Adrenal gland (tissue), 19 donors: ENCODE measurements at regions of chr2 and their contacts with region 1.

Region 1: GRCh38 chr2:100610381-100610831 is 47.6 kb downstream of the PDCL3 start:
- DNase-seq: peak; percentile 49 to 86 (median 69)
- H3K4me3 ChIP-seq: no peak overlapping the region
- H3K27ac ChIP-seq: no peak overlapping the region
- H3K4me1 ChIP-seq: no peaks in the 10 kb centered on the region
- H3K27me3 ChIP-seq: no peaks in the 10 kb centered on the region
- CTCF ChIP-seq: peak in 5 of 6 experiments; percentile 23 to 64 (median 54)
- POLR2A ChIP-seq: no peak

Region 2: DNA sequence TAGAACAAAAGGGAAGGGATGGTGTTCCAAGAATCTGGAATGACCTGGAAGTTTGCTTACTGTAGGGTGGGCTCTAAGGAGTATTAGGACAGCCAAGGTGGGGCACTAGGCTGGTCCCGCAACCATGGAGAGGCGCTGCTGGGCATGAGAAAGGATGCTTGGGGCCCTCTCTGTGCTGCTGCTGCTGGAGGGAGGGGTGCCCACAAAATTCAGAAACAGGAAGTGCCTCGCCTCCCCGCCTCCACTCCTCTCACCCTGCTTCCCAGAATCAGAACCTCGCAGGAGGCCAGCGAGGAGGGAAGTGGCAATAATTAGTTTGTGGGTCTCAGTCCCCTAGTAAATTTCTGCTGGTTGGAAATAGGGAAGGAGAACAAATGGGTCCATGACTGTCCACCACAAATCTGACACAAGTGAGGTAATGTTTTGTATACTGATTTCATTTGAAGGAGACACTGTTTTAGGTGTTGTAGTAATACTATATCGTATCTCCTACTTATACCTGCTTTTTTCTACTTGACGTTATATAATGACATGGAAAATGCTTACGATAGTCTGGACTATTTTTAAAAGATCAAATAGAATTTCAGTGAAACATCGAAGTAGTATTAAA is 55.5 kb before region 1 on chr2:
- intact Hi-C with region 1: no loop called
- DNase-seq: peak in 1 of 7 donors; percentile 12
- H3K4me3 ChIP-seq: no peak overlapping the region
- H3K27ac ChIP-seq: no peak overlapping the region
- H3K4me1 ChIP-seq: no peaks in the 10 kb centered on the region
- H3K27me3 ChIP-seq: no peaks in the 10 kb centered on the region
- CTCF ChIP-seq: no peak
- POLR2A ChIP-seq: no peak

Region 3: GRCh38 chr2:100767224-100767653 is 156.8 kb after region 1 on chr2:
- intact Hi-C with region 1: no loop called
- DNase-seq: no peak
- H3K4me3 ChIP-seq: no peak overlapping the region
- H3K27ac ChIP-seq: no peak overlapping the region
- H3K4me1 ChIP-seq: peaks cover 0 to 6% of the 10 kb centered on the region in 2 donors
- H3K27me3 ChIP-seq: no peaks in the 10 kb centered on the region
- CTCF ChIP-seq: no peak
- POLR2A ChIP-seq: no peak

Region 4: GRCh38 chr2:100882645-100883613 is 272.5 kb after region 1 on chr2:
- intact Hi-C with region 1: no loop called
- DNase-seq: peak; percentile 80 to 92 (median 88)
- H3K4me3 ChIP-seq: no peak overlapping the region
- H3K27ac ChIP-seq: peak overlapping the region in 2 of 5 donors; percentile 32 to 68
- H3K4me1 ChIP-seq: peaks cover 21% of the 10 kb centered on the region in 2 donors
- H3K27me3 ChIP-seq: no peaks in the 10 kb centered on the region
- CTCF ChIP-seq: no peak
- POLR2A ChIP-seq: no peak

Region 5: DNA sequence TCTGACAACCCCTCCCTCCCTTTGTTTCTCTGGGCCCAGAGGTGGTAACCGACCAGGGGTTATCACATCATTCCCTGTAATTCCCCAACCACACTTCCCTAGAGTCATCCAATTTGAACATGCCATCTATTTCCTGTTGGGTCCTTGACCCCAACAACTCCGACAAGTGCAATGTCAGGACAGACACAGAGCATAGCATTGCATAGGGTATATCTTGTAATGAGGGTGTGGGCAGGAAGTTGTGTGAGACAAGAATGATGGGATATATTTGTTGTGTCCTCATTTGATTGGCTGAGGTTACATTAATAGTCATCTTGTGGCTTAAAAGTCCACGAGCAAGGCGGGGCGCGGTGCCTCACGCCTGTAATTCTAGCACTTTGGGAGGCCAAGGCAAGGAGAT is 608.8 kb after region 1 on chr2:
- intact Hi-C with region 1: loop called in 1 of 2 experiments (anchors 10 kb)
- DNase-seq: no peak
- H3K4me3 ChIP-seq: no peak overlapping the region
- H3K27ac ChIP-seq: no peak overlapping the region
- H3K4me1 ChIP-seq: no peaks in the 10 kb centered on the region
- H3K27me3 ChIP-seq: no peaks in the 10 kb centered on the region
- CTCF ChIP-seq: no peak
- POLR2A ChIP-seq: no peak